Heart right ventricle (tissue), 16 donors: ENCODE measurements at regions of chr7 and their contacts with region 1.

Region 1: DNA sequence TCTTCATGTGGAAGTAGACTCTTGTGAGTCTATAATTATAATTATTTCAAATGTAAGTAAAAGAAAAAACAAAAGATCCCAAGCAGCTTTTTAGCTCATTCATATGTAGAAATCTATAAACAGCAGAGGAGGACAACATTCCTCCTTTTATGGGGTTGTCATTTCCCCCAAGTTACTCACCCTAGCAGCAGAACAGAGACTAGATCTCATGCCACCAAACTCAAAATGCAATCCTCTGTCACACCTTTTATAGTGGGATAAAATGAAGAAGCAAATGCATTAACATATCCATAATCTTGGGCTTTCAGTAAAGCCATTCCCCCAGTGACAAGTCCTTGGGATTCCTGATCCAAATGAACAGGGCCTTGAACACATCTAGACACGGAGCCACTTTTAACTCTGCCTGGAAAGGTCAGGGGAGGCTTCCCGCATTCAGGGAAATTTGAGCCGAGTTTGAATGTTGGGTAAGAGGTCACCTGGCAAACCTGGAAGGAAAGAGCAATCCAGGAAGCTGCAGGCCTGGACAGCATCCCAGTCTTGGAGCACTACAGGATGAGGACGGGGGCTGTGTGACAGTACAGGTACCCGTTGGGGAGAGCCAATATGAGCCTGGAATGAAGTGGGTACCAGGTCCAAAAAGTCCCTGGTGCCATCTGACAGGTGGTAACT is 76.4 kb downstream of the DOCK4 start:
- DNase-seq: peak in 1 of 2 donors; percentile 28
- ATAC-seq: peak in 7 of 8 donors; percentile 21 to 90 (median 48)
- H3K4me3 ChIP-seq: no peak overlapping the region
- H3K27ac ChIP-seq: peak overlapping the region in 7 of 10 donors; percentile 11 to 80 (median 59)
- H3K4me1 ChIP-seq: peaks cover 5 to 60% (median 51%) of the 10 kb centered on the region in 9 donors
- H3K27me3 ChIP-seq: no peaks in the 10 kb centered on the region
- CTCF ChIP-seq: no peak

Region 2: GRCh38 chr7:111605246-111605645 is 524.5 kb before region 1 on chr7:
- intact Hi-C with region 1: no loop called
- DNase-seq: no peak
- ATAC-seq: no peak
- H3K4me3 ChIP-seq: no peak overlapping the region
- H3K27ac ChIP-seq: no peak overlapping the region
- H3K4me1 ChIP-seq: no peaks in the 10 kb centered on the region
- H3K27me3 ChIP-seq: no peaks in the 10 kb centered on the region
- CTCF ChIP-seq: no peak

Region 3: DNA sequence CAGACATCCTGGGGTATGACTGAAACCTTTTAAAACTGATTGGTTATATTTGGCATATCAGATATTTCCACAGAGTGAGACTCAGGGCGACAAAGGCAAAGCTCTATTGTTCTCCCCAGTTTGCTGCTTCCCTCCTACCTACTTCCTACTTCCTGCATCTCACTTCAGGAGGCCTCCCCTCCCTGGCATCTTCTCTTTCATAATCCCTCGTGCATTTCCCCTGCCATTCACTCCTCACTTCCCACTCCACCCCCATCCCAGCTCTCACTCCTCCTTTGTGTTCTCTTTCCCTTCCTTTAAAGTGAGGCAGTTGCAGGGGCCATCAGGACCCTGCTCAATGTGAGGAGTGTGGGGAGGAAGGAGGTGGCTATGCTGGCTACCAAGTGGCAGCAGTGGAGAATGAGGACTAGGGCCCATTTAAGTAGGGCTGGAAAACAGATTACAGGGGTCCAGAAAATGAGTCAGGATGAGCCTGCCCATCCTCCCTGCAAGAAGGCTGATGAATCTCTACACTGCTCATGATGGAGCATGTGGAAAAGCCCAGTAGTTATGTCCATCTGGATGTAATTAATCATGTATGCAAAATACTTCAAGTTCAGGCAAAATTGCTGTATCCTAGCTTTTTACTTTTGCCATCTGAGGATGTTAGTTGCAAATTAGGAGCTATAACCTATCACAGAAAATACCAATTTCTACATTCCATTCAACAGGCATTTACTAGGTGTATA is 255.7 kb before region 1 on chr7:
- intact Hi-C with region 1: loop called in 1 of 10 experiments (anchors 10 kb)
- DNase-seq: peak in 1 of 2 donors; percentile 17
- ATAC-seq: peak in 7 of 8 donors; percentile 57 to 88 (median 68)
- H3K4me3 ChIP-seq: no peak overlapping the region
- H3K27ac ChIP-seq: peak overlapping the region in 8 of 10 donors; percentile 9 to 85 (median 63)
- H3K4me1 ChIP-seq: peaks cover 7 to 30% (median 14%) of the 10 kb centered on the region in 9 donors
- H3K27me3 ChIP-seq: no peaks in the 10 kb centered on the region
- CTCF ChIP-seq: no peak

Region 4: DNA sequence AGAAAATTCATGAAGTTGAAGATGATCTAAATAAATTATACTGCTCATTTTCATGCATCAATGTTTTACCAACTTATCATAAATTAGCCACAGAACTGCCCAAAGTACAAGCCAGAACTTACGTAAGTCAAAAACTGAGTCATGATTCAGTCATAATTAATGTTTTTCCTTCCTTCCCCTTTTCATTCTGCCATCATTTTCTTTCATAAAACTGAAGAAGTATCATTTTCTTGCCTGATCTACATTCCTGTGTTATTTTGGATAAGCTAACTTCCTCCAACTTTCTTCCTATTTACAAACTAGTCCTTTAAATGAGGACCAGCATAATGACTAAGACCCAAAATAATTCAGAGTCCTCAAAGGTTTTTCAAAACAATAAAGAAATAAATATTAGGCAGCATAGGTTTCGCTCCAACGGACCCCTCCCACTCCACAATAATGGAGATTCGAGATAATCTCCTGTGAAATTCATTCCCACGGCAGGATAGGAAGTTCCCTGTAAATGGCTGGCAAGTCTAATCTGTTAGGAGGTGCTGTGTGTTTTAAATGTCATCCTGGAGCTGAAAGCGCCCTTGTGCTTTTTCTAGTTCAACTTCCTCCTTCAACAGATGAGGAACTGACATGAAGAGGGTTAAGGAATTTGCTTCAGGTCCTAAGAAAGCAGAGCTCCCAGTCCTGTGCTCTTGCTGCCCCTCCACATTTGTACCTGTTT is 142.5 kb before region 1 on chr7:
- intact Hi-C with region 1: loop called in 1 of 10 experiments (anchors 1 kb)
- DNase-seq: peak in 1 of 2 donors; percentile 40
- ATAC-seq: peak; percentile 62 to 87 (median 80)
- H3K4me3 ChIP-seq: peak overlapping the region in 1 of 10 donors; percentile 0
- H3K27ac ChIP-seq: peak overlapping the region in 9 of 10 donors; percentile 0 to 86 (median 63)
- H3K4me1 ChIP-seq: peaks cover 0 to 30% (median 10%) of the 10 kb centered on the region in 9 donors
- H3K27me3 ChIP-seq: no peaks in the 10 kb centered on the region
- CTCF ChIP-seq: no peak

Region 5: DNA sequence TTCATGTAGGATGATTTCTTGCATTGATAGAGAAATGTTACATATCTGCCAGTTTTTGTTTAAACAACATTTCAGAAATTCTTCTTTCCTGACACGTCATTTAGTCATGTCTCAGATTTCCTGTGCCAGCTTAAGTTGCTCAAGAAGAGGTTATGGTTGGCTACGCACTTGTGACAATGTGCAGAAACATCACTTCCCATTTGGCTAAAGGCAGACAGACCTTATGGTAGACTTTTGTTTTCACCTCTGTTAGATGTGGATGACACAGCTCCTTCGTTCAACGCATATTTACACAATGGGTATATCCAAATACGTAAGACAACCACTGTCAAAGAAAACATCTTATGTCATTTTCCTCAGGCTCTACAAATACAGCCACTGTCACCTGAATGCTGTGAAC is 49.3 kb before region 1 on chr7:
- intact Hi-C with region 1: no loop called
- DNase-seq: no peak
- ATAC-seq: peak in 7 of 8 donors; percentile 37 to 78 (median 75)
- H3K4me3 ChIP-seq: peak overlapping the region in 2 of 10 donors; percentile 6 to 11
- H3K27ac ChIP-seq: peak overlapping the region in 6 of 10 donors; percentile 23 to 90 (median 57)
- H3K4me1 ChIP-seq: peaks cover 0 to 71% (median 37%) of the 10 kb centered on the region in 9 donors
- H3K27me3 ChIP-seq: no peaks in the 10 kb centered on the region
- CTCF ChIP-seq: no peak

Region 6: GRCh38 chr7:112162142-112163020 is 32.6 kb after region 1 on chr7:
- intact Hi-C with region 1: loop called in 1 of 10 experiments (anchors 1 kb)
- DNase-seq: peak; percentile 37 to 58
- ATAC-seq: peak; percentile 78 to 97 (median 92)
- H3K4me3 ChIP-seq: no peak overlapping the region
- H3K27ac ChIP-seq: peak overlapping the region in 5 of 10 donors; percentile 18 to 62 (median 56)
- H3K4me1 ChIP-seq: peaks cover 5 to 66% (median 36%) of the 10 kb centered on the region in 9 donors
- H3K27me3 ChIP-seq: no peaks in the 10 kb centered on the region
- CTCF ChIP-seq: no peak

Region 7: DNA sequence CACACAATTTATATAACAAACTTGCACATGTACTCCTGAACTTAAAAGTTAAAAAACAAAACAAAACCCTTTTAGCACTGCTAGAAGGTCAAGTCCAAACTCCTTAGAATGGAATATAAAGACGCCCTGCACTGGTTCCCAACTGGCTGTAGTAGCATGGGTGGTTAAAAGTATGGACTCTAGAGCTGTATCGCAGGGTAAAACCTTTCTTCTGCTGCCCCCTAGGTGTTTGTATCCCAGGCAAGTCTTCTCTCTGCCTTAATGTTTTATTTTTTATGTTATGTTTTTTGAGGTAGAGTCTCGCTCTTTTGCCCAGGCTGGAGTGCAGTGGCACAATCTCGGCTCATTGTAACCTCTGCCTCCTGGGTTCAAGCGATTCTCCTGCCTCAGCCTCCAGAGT is 386.2 kb after region 1 on chr7:
- intact Hi-C with region 1: no loop called
- DNase-seq: no peak
- ATAC-seq: no peak
- H3K4me3 ChIP-seq: no peak overlapping the region
- H3K27ac ChIP-seq: no peak overlapping the region
- H3K4me1 ChIP-seq: no peaks in the 10 kb centered on the region
- H3K27me3 ChIP-seq: peaks cover 0 to 10% (median 0%) of the 10 kb centered on the region in 7 donors
- CTCF ChIP-seq: no peak